Activated CD4-positive, alpha-beta T cell treated with anti-CD3 and anti-CD28 coated beads, Interleukin-2, amount 10 ng/mL, durations not matched to agents 24 days and 14 days (primary cell): ENCODE measurements at regions of chr10 and their contacts with region 1.

Region 1: DNA sequence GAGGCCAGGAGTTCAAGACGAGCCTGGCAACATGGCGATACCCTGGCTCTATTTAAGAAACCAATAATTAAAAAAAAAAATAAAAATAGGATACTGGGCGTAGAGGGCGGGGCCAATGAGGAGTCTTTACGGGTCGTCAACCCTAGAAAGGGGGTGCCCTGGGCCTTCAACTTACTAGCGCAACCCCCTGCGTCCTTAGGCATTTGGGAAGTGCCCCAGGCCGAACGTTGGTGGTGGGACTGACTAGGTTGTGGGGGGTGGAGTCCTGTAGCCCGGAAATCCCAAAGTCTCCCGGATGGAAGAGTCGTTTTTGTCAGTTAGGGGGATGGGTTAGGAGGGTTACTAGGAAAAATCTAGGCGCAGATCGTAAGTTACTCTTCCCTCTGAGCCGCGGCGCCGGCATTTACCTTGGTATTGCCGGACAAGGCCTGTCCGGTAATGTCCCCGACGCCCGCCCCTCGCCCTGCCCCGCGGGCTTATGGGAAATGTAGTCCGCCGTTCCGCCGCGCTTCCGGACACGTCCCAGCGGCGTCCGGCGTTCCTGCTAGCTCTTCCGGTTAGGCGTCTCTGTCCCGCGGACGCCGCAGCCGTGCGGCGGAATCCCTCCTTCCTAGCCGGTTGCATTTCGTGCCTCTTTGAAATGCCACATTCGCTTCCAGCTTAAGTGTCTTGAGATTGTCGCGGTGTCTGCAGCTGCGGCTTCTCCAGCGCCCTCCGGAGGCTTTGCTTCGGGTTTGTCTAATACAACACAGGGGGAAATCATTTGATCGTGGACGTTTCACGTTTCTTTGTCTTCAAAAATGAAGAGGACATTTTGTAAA is 1.3 kb upstream of the ACBD5 start:
- DNase-seq: peak; percentile 97
- H3K4me3 Mint-ChIP-seq: peak overlapping the region; percentile 96
- H3K27ac Mint-ChIP-seq: peak overlapping the region; percentile 99
- H3K4me1 Mint-ChIP-seq: peaks cover 31% of the 10 kb centered on the region
- H3K27me3 Mint-ChIP-seq: no peaks in the 10 kb centered on the region

Region 2: GRCh38 chr10:26737730-26738129 is 504.1 kb before region 1 on chr10:
- intact Hi-C with region 1: loop called (anchors 1 kb)
- DNase-seq: peak; percentile 83
- H3K4me3 Mint-ChIP-seq: peak overlapping the region; percentile 47
- H3K27ac Mint-ChIP-seq: peak overlapping the region; percentile 98
- H3K4me1 Mint-ChIP-seq: peaks cover 42% of the 10 kb centered on the region
- H3K27me3 Mint-ChIP-seq: no peaks in the 10 kb centered on the region

Region 3: GRCh38 chr10:27099916-27100812 is 141.7 kb before region 1 on chr10 and contains the start of gene ANKRD26:
- intact Hi-C with region 1: loop called (anchors 1 kb)
- DNase-seq: peak; percentile 99
- H3K4me3 Mint-ChIP-seq: peak within 1 kb of the TSS; percentile 85
- H3K27ac Mint-ChIP-seq: peak within 1 kb of the TSS; percentile 94
- H3K4me1 Mint-ChIP-seq: peaks cover 41% of the 10 kb centered on the region
- H3K27me3 Mint-ChIP-seq: peaks cover 2% of the 10 kb centered on the region
- total RNA-seq, gene ANKRD26: 5.3 and 5.8 TPM in 2 replicates

Region 4: GRCh38 chr10:27252267-27253000 is 10.6 kb after region 1 on chr10:
- intact Hi-C with region 1: loop called (anchors 1 kb)
- DNase-seq: peak; percentile 95
- H3K4me3 Mint-ChIP-seq: peak overlapping the region; percentile 82
- H3K27ac Mint-ChIP-seq: peak overlapping the region; percentile 85
- H3K4me1 Mint-ChIP-seq: peaks cover 17% of the 10 kb centered on the region
- H3K27me3 Mint-ChIP-seq: peaks cover 7% of the 10 kb centered on the region

Region 5: GRCh38 chr10:27345455-27345920 is 103.6 kb after region 1 on chr10:
- intact Hi-C with region 1: loop called (anchors 5 kb)
- DNase-seq: no peak
- H3K4me3 Mint-ChIP-seq: peak overlapping the region; percentile 15
- H3K27ac Mint-ChIP-seq: peak overlapping the region; percentile 68
- H3K4me1 Mint-ChIP-seq: peaks cover 21% of the 10 kb centered on the region
- H3K27me3 Mint-ChIP-seq: peaks cover 7% of the 10 kb centered on the region

Region 6: DNA sequence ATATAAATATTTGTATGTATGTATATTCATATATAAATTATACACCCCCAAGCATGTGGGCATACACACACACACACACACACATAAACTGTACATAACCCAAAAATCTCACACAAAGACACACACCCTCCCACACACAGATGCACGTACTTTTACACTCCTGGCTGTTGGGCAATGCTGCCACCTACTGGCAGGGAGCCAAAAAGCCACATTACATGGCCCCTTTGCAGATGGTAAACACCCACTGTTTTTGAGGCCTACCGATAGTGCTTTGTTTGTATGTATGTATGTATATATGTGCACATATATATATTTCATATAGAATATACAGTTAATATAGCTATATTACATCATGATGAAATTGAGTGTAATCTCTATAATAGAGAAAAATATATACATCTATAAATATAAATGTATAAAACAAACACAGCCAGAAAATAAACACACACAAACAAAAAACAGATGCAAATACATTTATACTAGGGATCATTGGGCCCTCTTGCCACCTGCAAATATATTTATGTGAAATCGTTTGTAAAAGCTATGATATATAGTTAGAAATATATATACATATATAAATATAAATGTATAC is 118.8 kb after region 1 on chr10:
- intact Hi-C with region 1: loop called (anchors 5 kb)
- DNase-seq: peak; percentile 95
- H3K4me3 Mint-ChIP-seq: no peak overlapping the region
- H3K27ac Mint-ChIP-seq: no peak overlapping the region
- H3K4me1 Mint-ChIP-seq: peaks cover 3% of the 10 kb centered on the region
- H3K27me3 Mint-ChIP-seq: no peaks in the 10 kb centered on the region

Region 7: GRCh38 chr10:27504007-27504807 is 262.3 kb after region 1 on chr10 and contains the start of gene RAB18:
- intact Hi-C with region 1: loop called (anchors 1 kb)
- DNase-seq: peak; percentile 99
- H3K4me3 Mint-ChIP-seq: peak within 1 kb of the TSS; percentile 99
- H3K27ac Mint-ChIP-seq: peak within 1 kb of the TSS; percentile 98
- H3K4me1 Mint-ChIP-seq: peaks cover 44% of the 10 kb centered on the region
- H3K27me3 Mint-ChIP-seq: peaks cover 6% of the 10 kb centered on the region
- total RNA-seq, gene RAB18: 55.4 and 58.3 TPM in 2 replicates